ENCODE measurements at regions of chr6 and their contacts with region 1.

Region 1: DNA sequence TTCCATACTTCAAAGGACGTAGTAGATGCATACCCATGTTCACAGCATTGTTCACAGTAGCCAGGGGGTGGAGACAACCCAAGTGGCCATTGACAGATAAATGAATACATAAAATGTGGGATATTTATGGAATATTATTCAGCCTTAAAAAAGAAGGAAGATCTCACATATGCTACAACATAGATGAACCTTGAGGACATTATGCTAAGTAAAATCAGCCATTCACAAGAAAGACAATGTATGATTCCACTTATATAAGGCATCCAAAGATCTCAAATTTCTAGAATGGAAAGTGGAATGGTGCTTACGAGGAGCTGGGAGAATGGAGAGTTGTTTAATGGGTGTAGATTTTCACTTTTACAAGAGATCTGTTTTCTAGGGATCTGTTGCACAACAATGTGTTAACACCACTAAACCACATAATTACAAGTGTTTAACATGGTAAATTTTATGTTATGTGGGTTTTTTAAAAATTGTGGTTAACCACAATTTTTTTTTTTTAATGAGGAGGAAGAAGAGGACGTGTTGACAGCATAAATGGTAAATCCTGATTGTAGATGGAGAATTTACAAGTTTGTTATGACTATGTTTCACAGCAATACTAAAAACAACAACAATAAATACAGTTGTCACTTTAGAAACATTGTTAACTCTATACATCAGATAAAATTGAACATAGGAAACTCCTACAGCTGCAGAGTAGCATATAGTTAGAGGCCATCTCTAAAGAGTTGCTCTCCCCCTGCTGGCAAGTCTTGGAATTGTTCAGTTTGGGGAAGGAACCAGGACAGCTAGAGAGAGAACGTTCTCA is 41.6 kb downstream of the CCN2 start:
- DNase-seq: peak; percentile 67 to 89
- ATAC-seq: peak; percentile 92

Region 2: GRCh38 chr6:131694831-131695426 is 214.7 kb before region 1 on chr6:
- intact Hi-C with region 1: loop called in 1 of 2 experiments (anchors 5 kb)
- DNase-seq: peak in 1 of 2 donors; percentile 31
- ATAC-seq: peak; percentile 90

Region 3: GRCh38 chr6:131782764-131783163 is 126.8 kb before region 1 on chr6:
- intact Hi-C with region 1: loop called in 1 of 2 experiments (anchors 5 kb)
- DNase-seq: peak in 1 of 2 donors; percentile 13
- ATAC-seq: peak; percentile 94

Region 4: DNA sequence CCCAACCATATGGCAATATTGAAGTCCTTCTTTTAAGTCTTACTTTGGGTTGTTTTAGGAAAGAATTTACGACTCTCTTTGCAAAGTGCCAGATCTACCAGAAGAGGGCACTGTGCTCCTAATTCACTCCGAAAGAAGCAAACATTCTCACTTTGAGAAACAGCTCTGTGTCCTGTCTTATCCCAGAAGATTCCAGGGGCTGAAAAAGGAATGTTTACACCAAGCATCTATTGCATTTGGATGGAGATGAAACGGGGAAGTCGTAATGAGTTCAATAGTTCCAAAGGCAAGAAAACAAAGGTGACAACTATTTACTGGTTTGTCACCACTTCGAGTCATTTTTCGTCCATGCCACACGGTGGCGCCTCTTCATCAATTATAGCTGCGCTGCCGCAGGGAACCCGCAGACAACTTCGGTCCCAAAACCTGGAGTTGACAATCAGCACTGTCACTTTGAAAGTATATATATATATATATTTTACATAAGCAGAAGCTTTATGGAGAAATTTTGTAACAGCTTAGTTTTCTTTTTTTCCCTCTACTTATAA is 370.1 kb after region 1 on chr6:
- intact Hi-C with region 1: loop called in 1 of 2 experiments (anchors 10 kb)
- DNase-seq: peak; percentile 49 to 69
- ATAC-seq: peak; percentile 85